Left lung (tissue), 14 donors: ENCODE measurements at regions of chr6 and their contacts with region 1.

Region 1: GRCh38 chr6:32974541-32975308 is 6.3 kb downstream of the BRD2 start:
- DNase-seq: no peak
- ATAC-seq: no peak
- H3K4me3 ChIP-seq: peak overlapping the region; percentile 98 to 100
- H3K27ac ChIP-seq: peak overlapping the region in 1 of 2 donors; percentile 99
- H3K4me1 ChIP-seq: peaks cover 9 to 56% of the 10 kb centered on the region in 2 donors
- H3K27me3 ChIP-seq: no peaks in the 10 kb centered on the region
- CTCF ChIP-seq: no peak

Region 2: GRCh38 chr6:32838114-32838958 is 136.4 kb before region 1 on chr6 and contains the start of gene TAP2:
- intact Hi-C with region 1: no loop called
- DNase-seq: peak; percentile 96 to 100 (median 96)
- ATAC-seq: peak; percentile 97
- H3K4me3 ChIP-seq: peak within 1 kb of the TSS; percentile 55 to 83
- H3K27ac ChIP-seq: peak within 1 kb of the TSS; percentile 86 to 97
- H3K4me1 ChIP-seq: peaks cover 22 to 68% of the 10 kb centered on the region in 2 donors
- H3K27me3 ChIP-seq: no peaks in the 10 kb centered on the region
- CTCF ChIP-seq: peak; percentile 94 to 99
- polyA plus RNA-seq, gene TAP2: 14.3 to 24.7 (median 15.9) TPM

Region 3: DNA sequence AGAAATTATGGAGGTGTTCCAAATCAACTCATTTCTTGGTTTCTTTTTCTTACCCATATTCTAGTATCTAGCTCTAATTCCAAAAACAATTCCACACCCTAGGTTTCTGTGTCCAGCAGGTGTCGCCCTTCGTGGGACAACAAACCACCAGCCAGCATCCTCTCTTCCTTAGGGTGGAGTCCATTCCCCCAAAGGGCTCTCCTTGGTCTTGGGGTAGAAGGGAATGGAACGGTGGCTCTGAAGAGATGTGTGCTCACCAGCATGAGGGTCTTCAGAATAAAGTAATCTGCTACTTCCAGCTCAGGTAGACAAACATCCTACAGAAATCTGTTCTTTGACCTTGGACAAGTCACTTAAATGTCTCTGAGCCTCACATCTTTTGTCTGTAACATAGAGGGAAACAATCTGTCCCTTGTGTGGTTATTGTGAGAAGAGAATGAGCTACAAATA is 41.1 kb before region 1 on chr6:
- intact Hi-C with region 1: loop called in 1 of 2 experiments (anchors 5 kb)
- DNase-seq: peak; percentile 59 to 85 (median 78)
- ATAC-seq: peak; percentile 86
- H3K4me3 ChIP-seq: no peak overlapping the region
- H3K27ac ChIP-seq: no peak overlapping the region
- H3K4me1 ChIP-seq: peaks cover 0 to 46% of the 10 kb centered on the region in 2 donors
- H3K27me3 ChIP-seq: no peaks in the 10 kb centered on the region
- CTCF ChIP-seq: peak; percentile 64 to 66

Region 4: DNA sequence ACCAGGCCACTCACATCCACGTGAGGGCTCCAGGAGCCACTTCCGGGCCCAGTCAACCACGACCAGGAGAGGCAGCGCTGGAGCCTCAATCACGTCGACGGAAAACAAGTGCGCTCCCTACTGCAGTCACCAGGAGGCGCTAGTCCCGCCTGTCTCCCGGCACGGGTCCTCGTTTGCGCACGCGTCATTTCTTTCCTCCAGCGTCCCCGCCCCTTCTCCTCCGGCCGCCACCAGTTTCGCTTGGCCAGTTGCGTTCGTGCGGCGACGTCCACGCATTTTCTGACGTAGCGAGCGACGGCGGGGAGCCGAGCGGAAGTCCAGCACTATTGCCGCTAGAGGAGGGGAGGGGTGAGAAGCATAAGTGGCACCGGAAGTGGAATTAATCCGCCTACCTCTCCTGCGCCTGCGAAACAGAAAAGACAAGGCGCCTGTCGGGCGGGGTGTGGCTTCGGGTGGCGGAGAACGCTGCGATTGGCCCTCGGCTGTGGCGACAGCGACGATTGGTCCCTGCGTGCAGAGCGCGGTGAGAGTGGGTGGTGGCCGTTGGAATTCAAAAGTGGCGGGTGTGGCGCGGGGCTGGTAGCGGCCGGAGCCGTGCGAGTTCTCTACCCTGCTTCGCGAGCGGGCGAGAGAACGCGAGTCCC is 416.7 kb after region 1 on chr6 and contains the start of gene KIFC1:
- intact Hi-C with region 1: no loop called
- DNase-seq: peak; percentile 99 to 100 (median 100)
- ATAC-seq: peak; percentile 95
- H3K4me3 ChIP-seq: peak within 1 kb of the TSS; percentile 55 to 57
- H3K27ac ChIP-seq: peak within 1 kb of the TSS; percentile 87 to 94
- H3K4me1 ChIP-seq: peaks cover 0 to 25% of the 10 kb centered on the region in 2 donors
- H3K27me3 ChIP-seq: no peaks in the 10 kb centered on the region
- CTCF ChIP-seq: peak; percentile 91 to 96
- polyA plus RNA-seq, gene KIFC1: 30.7 to 73.6 (median 42.4) TPM